Calu3 (cell line): ENCODE measurements at regions of chr16 and their contacts with region 1.

Region 1: GRCh38 chr16:8797364-8798173 is at the starts of genes PMM2 and TMEM186:
- DNase-seq: peak; percentile 98
- H3K4me3 Mint-ChIP-seq: peak within 1 kb of the TSS; percentile 99
- H3K27ac Mint-ChIP-seq: peak within 1 kb of the TSS; percentile 44
- H3K4me1 Mint-ChIP-seq: peaks cover 41% of the 10 kb centered on the region
- H3K27me3 Mint-ChIP-seq: no peaks in the 10 kb centered on the region
- CTCF ChIP-seq: no peak
- total RNA-seq, gene PMM2: 88.3 and 92.8 TPM in 2 replicates
- total RNA-seq, gene TMEM186: 20.9 and 23.6 TPM in 2 replicates

Region 2: DNA sequence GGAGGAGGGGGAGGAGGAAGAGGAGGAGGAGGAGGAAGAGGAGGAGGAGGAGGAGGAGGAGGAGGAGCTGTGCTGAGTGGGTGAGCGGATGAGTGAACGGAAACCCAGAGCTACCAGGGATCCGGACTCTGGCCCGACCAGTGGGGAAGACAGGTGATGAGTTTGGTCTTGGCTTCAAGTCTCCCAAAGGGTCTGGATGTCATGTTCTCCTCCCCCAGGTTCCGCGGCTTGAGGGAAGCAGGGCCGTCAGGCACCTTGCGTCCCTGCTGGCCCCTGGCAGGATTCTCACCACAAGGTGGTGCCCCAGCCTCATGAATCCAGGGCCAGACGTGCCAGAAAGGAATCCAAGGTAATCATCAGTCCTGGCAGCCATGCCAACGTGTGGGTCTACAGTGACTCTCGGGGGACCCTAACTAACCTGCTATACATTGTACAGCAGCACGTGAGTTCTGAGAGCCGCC is 136.7 kb before region 1 on chr16:
- CTCF ChIA-PET with region 1: interaction called, 4 read pairs
- intact Hi-C with region 1: loop called (anchors 1 kb)
- DNase-seq: peak; percentile 93
- H3K4me3 Mint-ChIP-seq: no peak overlapping the region
- H3K27ac Mint-ChIP-seq: no peak overlapping the region
- H3K4me1 Mint-ChIP-seq: no peaks in the 10 kb centered on the region
- H3K27me3 Mint-ChIP-seq: peaks cover 9% of the 10 kb centered on the region
- CTCF ChIP-seq: peak; percentile 90

Region 3: GRCh38 chr16:8674413-8675022 is 123.1 kb before region 1 on chr16 and contains the start of gene ABAT:
- CTCF ChIA-PET with region 1: interaction called, 3 read pairs
- intact Hi-C with region 1: loop called (anchors 5 kb)
- DNase-seq: peak; percentile 96
- H3K4me3 Mint-ChIP-seq: peak within 1 kb of the TSS; percentile 88
- H3K27ac Mint-ChIP-seq: peak within 1 kb of the TSS; percentile 73
- H3K4me1 Mint-ChIP-seq: peaks cover 51% of the 10 kb centered on the region
- H3K27me3 Mint-ChIP-seq: no peaks in the 10 kb centered on the region
- CTCF ChIP-seq: no peak
- total RNA-seq, gene ABAT: 12.6 and 14.2 TPM in 2 replicates

Region 4: DNA sequence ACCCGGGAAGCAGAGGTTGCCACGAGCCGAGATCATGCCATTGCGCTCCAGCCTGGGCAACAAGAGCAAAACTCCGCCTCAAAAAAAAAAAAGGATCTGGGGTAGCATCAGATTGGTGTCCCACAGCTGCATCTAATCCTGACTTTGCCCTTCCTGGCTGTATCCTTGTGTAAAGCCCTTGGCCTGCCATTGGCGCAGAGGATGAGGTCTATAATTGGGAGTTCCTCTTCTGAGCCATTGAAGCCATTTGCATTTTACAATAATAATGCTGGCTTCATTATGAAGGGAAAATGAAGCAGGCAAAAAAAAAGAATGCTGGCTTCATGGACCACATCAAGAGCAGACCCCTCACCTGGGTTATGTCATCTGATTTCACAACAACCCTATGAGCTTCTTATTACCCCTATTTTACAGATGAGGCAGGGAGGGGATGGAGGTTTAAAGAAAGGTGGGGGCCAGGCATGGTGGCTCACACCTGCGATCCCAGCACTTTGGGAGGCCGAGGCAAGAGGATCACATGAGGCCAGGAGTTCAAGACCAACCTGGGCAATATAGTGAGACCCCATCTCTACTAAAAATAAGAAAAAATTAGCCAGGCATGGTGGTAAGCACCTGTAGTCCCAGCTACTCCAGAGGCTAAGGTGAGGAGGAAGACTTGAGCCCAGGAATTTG is 83.4 kb after region 1 on chr16:
- CTCF ChIA-PET with region 1: interaction called, 3 read pairs
- intact Hi-C with region 1: loop called (anchors 5 kb)
- DNase-seq: no peak
- H3K4me3 Mint-ChIP-seq: no peak overlapping the region
- H3K27ac Mint-ChIP-seq: no peak overlapping the region
- H3K4me1 Mint-ChIP-seq: peaks cover 29% of the 10 kb centered on the region
- H3K27me3 Mint-ChIP-seq: no peaks in the 10 kb centered on the region
- CTCF ChIP-seq: no peak